ENCODE measurements at regions of chr1 and their contacts with region 1.

Region 1: DNA sequence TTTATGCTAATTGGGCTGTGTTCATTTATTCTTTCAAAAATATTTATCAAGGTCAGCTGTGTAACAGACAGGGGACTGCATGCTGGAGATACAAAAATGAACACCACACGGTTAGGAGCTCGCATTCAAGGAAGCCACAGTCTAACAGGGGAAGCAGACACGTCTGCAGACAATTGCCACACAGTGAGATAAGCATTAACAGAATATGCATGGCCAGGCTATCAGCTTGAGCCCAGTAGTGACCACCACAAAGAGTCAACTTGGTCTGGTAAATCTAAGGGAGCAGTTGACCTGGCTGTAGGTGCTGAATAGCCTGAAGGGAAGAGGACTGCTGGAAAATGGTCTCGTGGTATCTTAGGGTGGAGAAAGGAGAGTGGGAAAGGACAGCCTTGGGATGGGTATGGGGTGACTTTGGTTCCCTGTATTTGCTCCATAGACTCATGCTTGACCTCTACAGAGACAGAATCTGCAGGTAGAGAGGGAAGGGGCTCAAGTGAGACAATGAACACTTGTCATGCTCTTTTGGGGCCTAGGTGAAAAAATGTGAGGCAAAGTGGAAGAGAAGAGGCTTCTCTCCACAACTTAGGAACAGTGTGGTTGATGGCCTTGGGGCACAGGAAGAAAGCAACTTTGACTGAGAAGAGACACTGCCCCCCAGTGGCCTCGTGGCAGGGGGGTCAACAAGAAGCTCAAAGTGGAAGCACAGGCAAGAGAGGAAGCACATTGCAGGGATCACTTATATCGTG is 7.6 kb upstream of the NPL start:
- DNase-seq: peak; percentile 59
- H3K27ac ChIP-seq: no peak overlapping the region
- CTCF ChIP-seq: peak; percentile 30

Region 2: GRCh38 chr1:182595641-182596240 is 186.3 kb before region 1 on chr1:
- CTCF ChIA-PET with region 1: interaction called, 106 read pairs
- POLR2A ChIA-PET with region 1: no interaction called
- DNase-seq: peak; percentile 51
- H3K27ac ChIP-seq: no peak overlapping the region
- CTCF ChIP-seq: peak; percentile 61

Region 3: DNA sequence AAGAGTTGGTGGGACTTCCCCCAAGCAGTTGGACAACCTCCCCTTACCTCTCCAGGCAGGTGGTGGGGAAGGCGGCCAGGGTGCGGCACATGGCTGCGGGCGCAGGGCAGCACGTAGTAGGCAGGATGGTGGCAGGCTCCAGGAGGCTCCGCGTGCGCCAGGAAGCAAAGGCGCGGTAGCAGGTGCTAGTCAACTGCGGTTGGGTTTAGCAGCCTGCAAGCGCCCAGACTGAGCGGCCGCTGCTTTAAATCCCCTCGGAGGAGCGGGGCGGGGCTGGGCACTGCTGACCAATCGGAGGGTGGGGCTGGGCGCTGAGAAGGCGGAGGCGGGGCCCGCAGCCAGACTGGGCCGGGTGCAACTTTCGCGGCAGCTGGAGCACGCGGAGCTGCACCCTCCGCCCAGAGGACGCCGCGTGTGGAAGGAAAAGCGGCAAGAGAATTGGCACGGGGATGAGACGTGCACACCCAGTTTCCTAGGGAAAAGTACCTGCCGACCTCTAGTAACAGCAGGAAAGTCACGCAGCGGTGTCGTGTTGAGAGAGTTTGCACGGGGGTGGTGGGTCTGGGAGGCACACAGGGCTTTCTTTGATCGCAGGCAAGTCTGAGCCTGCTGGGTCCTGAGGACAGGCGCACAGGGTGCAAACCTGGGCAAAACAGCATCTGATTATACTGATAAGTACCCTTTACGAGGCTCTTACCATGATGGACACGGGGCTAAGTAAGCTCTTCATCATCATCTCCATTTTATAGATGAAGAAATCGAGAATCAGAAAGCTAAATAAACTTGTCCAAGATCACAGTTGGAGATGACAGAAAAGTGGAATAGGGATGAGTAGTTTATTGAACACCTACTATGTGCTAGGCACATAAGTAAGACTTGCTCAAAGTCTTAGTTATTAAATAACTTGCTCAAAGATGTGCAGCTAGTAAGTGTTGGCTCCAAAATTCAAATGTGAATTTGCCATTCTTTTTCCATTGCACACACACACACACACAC is 177.5 kb before region 1 on chr1 and contains the start of gene RGS16:
- CTCF ChIA-PET with region 1: interaction called, 106 read pairs
- POLR2A ChIA-PET with region 1: no interaction called
- DNase-seq: peak; percentile 96
- H3K27ac ChIP-seq: peak within 1 kb of the TSS; percentile 37; the same call in 1 of the 2 replicates
- CTCF ChIP-seq: no peak

Region 4: GRCh38 chr1:182771187-182771984 is 10.6 kb before region 1 on chr1:
- CTCF ChIA-PET with region 1: interaction called, 10 read pairs
- POLR2A ChIA-PET with region 1: no interaction called
- DNase-seq: no peak
- H3K27ac ChIP-seq: no peak overlapping the region
- CTCF ChIP-seq: no peak

Region 5: DNA sequence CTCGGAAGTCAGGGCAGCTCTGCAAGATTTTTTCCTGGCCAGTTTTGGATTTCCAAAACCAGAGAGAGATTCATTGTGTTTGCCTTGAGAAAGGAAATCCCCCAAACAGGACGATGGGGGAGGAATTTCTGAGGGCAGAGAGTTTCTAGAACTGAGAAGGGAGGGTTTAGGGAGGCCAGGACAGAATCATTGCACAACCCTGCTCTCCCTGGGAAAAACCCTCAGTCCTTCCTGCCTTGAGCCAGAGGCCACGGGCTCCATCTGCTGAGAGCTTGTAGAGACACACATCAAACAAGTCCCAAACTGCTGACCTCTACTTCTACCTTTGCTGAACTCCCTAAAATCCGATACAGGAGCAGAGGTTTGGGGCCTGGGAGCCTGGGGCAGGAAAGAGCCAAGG is 536.4 kb after region 1 on chr1:
- CTCF ChIA-PET with region 1: no interaction called
- POLR2A ChIA-PET with region 1: no interaction called
- DNase-seq: peak; percentile 74
- H3K27ac ChIP-seq: peak overlapping the region; percentile 26
- CTCF ChIP-seq: peak; percentile 73

Measured in RWPE1 (cell line).